Lower leg skin (tissue), 4 donors: ENCODE measurements at regions of chr12 and their contacts with region 1.

Region 1: DNA sequence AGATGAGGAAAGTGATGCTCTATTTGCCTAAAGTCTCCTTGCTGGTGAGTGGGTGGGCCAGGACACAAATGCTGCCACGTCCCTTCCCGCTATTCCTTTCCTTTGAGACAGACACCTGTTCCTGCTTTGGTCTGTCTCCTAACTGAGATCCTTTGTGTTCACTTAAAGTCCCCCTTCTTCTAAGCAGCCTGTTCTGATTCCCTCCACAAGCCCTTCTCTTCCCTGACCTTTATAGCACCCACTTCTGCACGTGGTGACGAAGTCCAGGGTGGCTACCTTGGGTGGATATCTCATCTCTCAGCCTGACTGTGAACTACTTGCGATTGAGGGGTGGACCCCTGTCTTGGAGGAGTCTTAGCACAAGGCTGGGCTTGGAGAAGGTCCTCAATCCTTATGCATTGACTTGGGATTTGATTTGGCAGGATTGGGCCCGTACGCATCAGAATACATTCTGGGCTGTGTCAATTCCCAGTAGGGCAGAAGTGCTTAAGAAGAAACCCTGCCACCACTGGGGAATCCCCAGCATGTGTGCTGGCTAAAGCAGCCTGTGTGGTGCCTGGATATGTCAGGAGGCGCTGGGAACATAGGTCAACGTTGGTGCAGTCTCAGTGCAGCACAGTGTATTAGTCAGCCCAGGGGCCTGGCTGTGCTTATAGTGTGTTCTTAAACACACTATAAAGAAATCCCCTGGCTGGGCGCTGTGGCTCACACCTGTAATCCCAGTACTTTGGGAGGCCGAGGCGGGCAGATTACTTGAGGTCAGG is 23.7 kb downstream of the KRT80 start:
- DNase-seq: no peak
- H3K4me3 ChIP-seq: no peak overlapping the region
- CTCF ChIP-seq: no peak
- POLR2A ChIP-seq: no peak

Region 2: GRCh38 chr12:52278541-52279421 is 110.6 kb after region 1 on chr12:
- intact Hi-C with region 1: loop called (anchors 5 kb)
- DNase-seq: peak; percentile 69 to 96
- H3K4me3 ChIP-seq: no peak overlapping the region
- CTCF ChIP-seq: no peak
- POLR2A ChIP-seq: no peak

Region 3: DNA sequence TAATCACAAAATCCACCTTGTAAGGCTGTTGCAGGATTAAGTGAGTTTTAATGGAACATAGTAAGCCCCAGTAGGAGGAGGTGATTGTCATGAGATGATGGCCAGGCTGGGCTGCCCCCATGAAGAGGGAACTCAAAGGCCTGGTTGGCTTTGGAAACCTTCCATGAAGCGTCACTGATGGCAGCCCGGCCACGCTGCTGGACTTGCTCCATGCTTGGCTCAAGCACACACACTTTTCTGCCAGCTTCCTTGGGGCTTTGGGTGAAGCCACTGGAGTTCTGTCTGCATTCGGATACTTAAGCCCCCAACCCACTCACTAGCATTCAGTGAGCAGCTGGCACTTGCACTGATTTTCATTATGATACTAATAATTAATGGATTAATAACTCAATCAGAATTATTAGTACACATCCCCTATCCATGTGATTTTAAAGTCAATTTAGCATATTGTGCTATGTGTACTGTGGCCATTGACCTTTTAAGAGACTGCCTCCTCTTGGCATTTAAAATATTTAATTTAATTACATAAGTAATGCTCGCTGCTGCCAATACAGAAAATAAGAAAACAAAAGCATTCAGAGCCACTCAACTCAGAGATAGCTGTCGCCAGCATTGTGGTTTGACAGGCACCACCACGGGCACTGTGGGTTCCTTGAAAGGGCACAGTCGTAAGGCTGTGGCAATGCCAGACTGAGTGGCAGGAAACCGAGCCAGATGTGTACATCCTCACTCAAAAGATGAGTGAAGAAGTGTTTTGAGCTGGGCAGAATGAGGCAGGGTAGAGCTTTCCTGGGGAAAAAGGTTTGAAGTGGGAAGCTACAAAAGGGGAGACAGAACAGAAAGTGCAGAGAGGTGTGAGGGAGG is 183.3 kb after region 1 on chr12:
- intact Hi-C with region 1: no loop called
- DNase-seq: peak in 1 of 2 donors; percentile 84
- H3K4me3 ChIP-seq: no peak overlapping the region
- CTCF ChIP-seq: no peak
- POLR2A ChIP-seq: no peak

Region 4: GRCh38 chr12:53579545-53579955 is 1411.4 kb after region 1 on chr12:
- intact Hi-C with region 1: no loop called
- DNase-seq: no peak
- H3K4me3 ChIP-seq: no peak overlapping the region
- CTCF ChIP-seq: no peak
- POLR2A ChIP-seq: no peak